ENCODE measurements at regions of chr14 and their contacts with region 1.

Region 1: DNA sequence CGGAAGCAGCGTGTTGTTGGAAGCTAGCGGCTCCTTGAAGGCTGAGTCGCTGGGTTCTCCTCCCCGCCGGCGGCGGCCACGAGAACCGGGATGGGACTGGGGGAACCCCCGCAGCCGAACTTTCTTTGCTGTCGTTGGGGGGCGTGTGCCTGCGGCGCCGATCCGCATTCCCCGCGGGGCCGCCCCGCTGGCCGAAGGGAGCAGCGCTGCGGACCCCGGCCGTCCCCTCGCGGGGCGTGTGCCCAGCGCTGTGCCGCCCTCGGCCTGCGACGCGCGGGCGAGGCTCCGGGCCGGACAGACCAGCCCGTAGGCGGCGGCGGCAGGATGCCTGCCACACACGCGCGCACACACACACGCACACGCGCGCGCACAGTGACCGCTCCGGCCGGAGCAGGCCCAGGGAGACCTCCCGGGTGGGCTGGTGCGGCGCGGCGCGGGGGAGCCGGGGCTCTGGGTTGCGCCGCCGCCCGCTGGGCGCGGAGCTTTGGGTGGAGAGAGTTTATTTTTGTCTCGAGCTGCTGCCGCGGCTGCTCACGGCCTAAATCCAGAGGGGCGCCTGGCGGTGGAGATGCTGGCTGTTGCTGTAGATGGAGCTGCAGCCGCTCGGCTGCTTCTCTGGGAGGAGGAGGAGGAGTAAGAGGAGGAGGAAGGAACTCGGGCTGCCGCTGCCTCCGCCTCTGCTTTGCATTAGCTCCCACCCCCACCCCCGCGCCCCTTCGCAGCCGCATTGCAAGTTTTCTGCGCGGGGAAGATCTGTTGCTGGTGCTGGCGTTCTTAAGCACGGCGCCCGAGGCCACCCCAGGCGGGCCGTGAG is at the start of gene SAMD4A:
- DNase-seq: peak; percentile 90
- total RNA-seq, gene SAMD4A: 252 TPM

Region 2: DNA sequence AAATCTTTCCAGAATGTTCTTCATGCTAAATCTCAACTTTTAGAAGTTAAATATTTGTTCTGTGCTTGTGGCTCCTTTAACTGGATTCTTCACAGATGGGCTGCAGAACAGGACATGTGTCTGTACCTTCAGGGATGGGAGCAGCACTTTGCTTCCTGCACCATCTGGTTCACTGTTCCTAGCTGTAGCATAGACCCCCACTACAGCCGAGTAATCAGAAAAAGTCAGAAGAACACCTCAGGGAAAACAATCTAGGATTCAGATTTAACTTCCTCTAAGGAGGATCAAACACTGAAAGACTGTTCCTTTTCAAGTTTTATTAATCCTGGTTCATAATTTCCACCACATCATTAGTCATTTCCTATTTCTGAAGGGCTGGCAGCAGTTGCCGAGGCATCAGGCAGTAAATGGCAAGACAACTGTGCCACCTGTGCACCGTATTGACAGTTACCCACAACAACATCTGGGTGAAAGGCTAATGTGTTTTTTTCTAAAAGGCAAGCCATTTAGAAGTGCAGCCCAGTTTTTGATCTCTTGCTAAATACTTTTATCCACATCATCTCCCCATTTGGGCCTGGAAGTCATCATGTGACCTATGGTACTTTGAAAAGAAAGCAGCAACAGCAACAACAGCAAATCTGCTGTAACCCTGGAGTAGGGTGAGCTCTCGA is 397.2 kb before region 1 on chr14:
- intact Hi-C with region 1: no loop called
- DNase-seq: no peak

Region 3: DNA sequence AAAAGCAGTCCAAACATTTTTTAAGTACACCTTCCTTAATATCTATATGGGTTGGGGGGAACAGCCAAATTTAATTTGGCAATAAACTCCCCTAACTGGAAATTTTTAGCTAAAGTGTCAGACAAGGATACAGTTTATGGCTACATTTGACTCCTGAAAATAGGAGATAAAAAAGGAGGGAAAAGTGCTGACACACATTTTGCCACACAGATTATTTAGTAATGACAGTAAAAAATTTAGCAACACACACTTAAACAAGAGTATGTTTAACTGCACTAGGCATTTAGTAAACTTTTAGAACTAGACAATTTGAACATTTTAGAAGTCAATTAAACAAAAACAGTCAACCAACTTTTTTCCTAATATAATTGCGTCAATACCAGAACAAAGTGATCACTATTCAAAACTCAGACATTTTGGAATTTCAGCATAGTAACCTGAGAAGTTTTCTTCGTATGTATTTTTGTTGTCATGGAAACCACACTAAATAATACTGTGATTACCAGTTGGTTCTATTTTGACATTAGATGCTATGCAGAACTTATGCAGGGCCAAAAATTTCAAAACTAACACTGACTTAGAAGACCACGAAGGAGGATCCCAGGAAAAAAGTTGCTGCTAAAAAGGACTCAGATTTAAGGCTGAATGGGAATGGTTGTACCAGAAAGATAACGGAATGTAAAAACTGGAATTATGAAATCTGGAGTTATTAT is 91.3 kb before region 1 on chr14:
- intact Hi-C with region 1: no loop called
- DNase-seq: no peak

Region 4: DNA sequence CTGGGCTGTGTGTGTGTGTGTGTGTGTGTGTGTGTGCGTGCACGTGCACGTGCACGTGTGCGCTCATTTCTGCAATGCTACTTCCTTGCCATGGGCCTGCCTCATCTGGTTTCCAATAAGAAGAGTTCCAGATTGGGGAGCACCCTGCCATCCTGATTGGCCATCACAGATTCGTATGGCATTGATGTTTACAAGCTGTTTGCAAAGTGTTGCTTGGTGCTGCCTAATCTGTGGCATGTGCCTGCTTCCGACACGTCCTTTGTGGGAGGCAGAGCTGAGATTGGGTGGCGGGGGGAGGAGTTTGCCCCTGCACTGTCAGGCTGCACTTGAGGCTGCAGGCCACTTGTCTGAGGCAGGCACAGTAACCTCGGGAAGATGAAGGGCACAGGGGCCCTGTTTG is 39.6 kb after region 1 on chr14:
- intact Hi-C with region 1: loop called (anchors 2 kb)
- DNase-seq: peak; percentile 91

Region 5: GRCh38 chr14:54652188-54652587 is 85.6 kb after region 1 on chr14:
- intact Hi-C with region 1: loop called (anchors 5 kb)
- DNase-seq: peak; percentile 89

Region 6: DNA sequence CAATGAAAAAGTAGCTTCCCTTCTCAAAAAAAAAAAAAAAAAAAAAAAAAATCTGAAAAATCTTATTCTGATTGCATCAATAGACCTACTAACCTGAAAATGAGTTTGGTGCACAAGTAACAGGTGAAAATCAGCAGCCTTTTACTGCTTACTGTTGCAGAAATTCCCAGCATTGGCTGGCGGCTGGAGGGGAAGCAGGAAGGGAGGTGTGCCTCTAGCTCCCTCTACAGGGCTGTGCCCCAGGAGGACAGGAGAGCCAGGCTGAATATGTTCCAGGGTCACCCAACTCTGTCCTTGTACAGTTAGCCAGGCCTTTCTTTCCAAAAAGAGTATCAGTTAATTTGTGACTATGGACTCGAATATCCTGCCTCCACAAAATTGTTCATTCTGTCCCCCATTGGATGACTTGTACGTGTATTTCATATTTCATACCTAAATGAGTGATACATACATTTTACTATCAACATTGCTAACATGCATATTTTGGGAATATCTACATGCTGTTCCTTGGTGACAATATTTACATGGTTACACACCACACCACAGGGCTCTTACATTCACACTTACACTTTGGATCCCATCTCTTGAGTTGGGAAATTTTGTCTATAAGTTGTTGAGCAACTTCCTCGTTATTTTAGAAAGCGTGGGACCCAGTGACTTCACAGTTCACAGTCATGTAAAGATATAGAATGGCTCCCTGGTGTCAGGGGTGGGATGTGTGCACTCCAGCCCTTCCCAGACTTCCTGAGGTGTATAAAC is 125.1 kb after region 1 on chr14:
- intact Hi-C with region 1: loop called (anchors 2 kb)
- DNase-seq: peak; percentile 87

Region 7: GRCh38 chr14:54773171-54773975 is 206.8 kb after region 1 on chr14:
- intact Hi-C with region 1: loop called (anchors 1 kb)
- DNase-seq: peak; percentile 91

Region 8: DNA sequence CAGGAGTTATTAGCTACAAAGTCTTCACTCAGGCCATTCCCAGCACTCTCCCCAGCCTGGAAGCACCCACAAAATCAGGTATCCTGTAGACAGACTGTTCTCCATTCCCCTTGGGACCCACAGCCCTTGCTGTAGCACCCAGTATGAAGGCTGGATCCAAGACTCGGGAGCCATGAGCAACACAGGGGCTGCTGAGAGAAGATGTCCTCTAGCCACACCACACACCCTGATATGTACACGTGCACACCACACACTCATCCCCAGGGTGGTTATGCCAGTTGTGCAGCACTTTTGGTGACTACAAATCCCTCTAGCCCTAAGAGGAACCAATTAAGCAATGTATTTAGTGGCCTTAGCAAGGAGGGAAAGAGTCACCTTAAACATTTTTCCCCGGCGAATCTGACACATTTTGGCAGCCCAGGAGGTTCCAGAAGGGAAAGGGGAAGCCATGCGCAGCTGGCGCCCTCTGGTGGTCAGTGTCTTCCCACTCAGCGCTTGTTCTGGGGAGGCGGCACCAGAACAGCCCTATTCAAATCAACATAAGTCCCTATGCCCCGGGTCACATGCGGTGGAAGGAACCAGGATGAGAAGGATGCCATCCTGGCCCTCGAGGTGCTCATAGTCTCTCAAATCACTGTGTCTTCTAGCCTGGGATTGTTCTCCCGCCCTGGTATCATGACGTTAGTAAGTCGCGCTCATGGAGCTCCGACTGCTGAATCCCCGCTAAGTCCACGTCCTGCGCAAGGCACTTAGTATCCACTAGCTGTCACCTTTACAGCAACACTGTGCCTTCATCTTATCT is 239.1 kb after region 1 on chr14:
- intact Hi-C with region 1: loop called (anchors 1 kb)
- DNase-seq: peak; percentile 85

Region 9: GRCh38 chr14:54893151-54893760 is 326.6 kb after region 1 on chr14:
- intact Hi-C with region 1: loop called (anchors 5 kb)
- DNase-seq: no peak